SK-N-SH (cell line): ENCODE measurements at regions of chr6 and their contacts with region 1.

Region 1: GRCh38 chr6:157667211-157668008 is 155.6 kb upstream of the SNX9 start:
- DNase-seq: peak; percentile 77
- H3K4me3 ChIP-seq: peak overlapping the region in 1 of 2 experiments; percentile 37; a peak in 1 of 4 replicates
- H3K27ac ChIP-seq: no peak overlapping the region
- H3K4me1 ChIP-seq: peaks cover 5 to 9% of the 10 kb centered on the region in 2 experiments; a peak in 3 of 4 replicates
- H3K27me3 ChIP-seq: no peaks in the 10 kb centered on the region
- CTCF ChIP-seq: peak; percentile 87
- EP300 ChIP-seq: no peak
- RAD21 ChIP-seq: peak; percentile 88

Region 2: GRCh38 chr6:157314705-157315321 is 352.6 kb before region 1 on chr6:
- CTCF ChIA-PET with region 1: interaction called, 54 read pairs
- POLR2A ChIA-PET with region 1: no interaction called
- DNase-seq: peak; percentile 69
- H3K4me3 ChIP-seq: no peak overlapping the region; a peak in 1 of 4 replicates
- H3K27ac ChIP-seq: peak overlapping the region in 1 of 2 experiments; percentile 27; a peak in 2 of 4 replicates
- H3K4me1 ChIP-seq: no peaks in the 10 kb centered on the region; a peak in 2 of 4 replicates
- H3K27me3 ChIP-seq: no peaks in the 10 kb centered on the region
- CTCF ChIP-seq: peak; percentile 95
- EP300 ChIP-seq: no peak
- RAD21 ChIP-seq: peak; percentile 95

Region 3: DNA sequence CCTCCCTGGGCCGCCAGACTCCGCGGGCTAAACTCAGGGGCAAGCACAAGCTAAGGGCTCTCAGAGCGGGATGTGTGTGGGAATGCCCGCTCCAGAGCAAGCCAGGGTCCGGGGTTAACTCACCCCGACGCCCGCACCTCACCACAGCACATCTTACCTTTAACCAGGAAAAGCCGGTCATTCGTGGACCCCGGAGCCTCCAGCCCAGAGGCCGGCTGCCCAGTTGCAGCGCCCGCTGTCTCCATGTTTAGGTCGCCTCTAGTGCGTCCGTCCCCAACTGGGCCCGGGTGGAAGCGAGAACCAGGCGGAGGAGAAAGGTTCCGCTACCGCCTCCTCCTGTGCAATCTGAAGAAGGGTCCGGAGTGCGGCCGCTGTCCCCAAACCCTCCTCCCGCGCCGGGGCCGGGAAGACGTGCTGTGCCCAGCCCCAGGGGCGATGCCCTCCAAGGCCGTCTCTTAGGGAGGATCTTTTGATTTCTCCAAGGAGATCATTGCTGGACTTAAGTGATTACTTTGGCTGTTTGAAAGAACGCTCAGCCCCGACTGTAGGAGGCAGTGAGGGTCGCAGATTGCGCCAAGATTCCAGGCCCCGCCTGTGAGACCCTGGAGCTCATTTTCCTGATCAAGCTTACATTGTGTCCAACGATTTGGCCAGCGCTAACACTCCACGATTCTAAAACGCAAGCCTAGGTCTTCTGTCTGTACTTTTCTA is 344.0 kb before region 1 on chr6 and contains the start of gene TMEM242:
- CTCF ChIA-PET with region 1: interaction called, 20 read pairs
- POLR2A ChIA-PET with region 1: interaction called, 10 read pairs
- DNase-seq: peak; percentile 89
- H3K4me3 ChIP-seq: peak within 1 kb of the TSS; percentile 79 to 89
- H3K27ac ChIP-seq: peak within 1 kb of the TSS; percentile 89 to 94
- H3K4me1 ChIP-seq: peaks cover 7 to 11% of the 10 kb centered on the region in 2 experiments; a peak in 3 of 4 replicates
- H3K27me3 ChIP-seq: no peaks in the 10 kb centered on the region
- CTCF ChIP-seq: no peak
- EP300 ChIP-seq: peak in 1 of 2 experiments; percentile 66; a peak in 1 of 4 replicates
- RAD21 ChIP-seq: no peak; the same call in 1 of the 2 replicates
- polyA plus RNA-seq, gene TMEM242: 7.4 and 8.3 TPM in 2 replicates

Region 4: DNA sequence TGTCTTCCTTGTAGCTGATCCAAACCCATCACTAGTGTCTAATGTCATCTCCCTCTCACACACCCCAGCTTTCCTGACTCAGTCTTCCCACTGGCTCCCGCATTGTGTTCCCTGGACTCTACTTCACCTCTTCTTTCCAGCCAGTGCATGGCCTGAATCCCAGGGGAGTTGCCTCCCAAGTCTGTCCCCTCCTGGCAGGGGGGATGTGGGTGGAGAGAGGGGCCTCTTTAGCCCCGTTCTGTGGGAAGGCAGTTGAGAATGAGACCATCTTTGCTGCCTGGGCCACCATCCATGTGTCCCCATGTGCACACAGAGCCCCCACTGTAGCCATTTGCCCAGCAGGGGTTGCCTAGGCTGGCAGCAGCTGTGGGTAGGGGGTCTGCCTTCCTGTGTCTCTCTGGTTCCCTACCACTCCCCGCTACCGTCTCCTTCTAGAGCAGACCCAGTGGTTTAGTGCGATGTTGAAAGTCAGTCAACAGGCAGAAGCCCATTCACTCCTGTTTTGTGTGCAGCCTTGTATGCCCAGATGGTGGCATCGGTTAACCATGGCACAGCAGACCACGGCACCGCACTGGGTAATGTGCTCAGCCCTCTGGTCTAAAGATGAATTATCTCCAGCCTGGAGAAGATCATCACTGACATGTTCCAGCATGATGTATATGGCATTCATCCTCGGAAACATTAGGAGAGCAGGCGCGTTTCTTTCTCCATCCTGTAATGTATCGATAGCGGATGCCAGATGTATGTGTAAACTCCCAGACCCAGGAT is 23.2 kb before region 1 on chr6:
- CTCF ChIA-PET with region 1: interaction called, 35 read pairs
- POLR2A ChIA-PET with region 1: no interaction called
- DNase-seq: peak; percentile 75
- H3K4me3 ChIP-seq: no peak overlapping the region
- H3K27ac ChIP-seq: no peak overlapping the region
- H3K4me1 ChIP-seq: peaks cover 0 to 9% of the 10 kb centered on the region in 2 experiments; a peak in 1 of 4 replicates
- H3K27me3 ChIP-seq: no peaks in the 10 kb centered on the region
- CTCF ChIP-seq: peak; percentile 34
- EP300 ChIP-seq: 0 out of 4 replicates have a peak, but pooled peaks of 1 of the 2 experiments have one; percentile 23
- RAD21 ChIP-seq: peak; percentile 69

Region 5: DNA sequence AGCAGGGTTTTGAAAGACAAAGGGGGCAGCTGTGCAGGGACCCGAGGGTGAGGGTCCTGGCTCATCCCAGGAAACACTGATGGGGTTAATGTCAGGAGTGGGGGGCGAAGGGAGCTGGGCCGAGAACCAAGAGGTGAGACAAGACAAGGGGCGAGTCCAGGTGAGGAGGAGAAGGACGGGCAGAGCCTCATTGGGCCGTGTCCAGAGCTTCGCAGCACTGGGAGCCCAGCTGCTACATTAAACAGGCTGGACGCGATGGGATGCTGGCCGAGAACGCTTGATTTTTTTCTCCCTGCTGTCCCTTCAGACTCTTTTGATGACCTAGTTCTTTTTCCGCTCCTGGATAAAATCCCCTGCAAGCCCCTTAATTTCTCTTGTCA is 17.2 kb before region 1 on chr6:
- CTCF ChIA-PET with region 1: interaction called, 51 read pairs
- POLR2A ChIA-PET with region 1: no interaction called
- DNase-seq: peak; percentile 71
- H3K4me3 ChIP-seq: no peak overlapping the region; a peak in 1 of 4 replicates
- H3K27ac ChIP-seq: no peak overlapping the region
- H3K4me1 ChIP-seq: peaks cover 0 to 16% of the 10 kb centered on the region in 2 experiments; a peak in 1 of 4 replicates
- H3K27me3 ChIP-seq: no peaks in the 10 kb centered on the region
- CTCF ChIP-seq: no peak
- EP300 ChIP-seq: no peak
- RAD21 ChIP-seq: no peak

Region 6: GRCh38 chr6:157656437-157656997 is 10.9 kb before region 1 on chr6:
- CTCF ChIA-PET with region 1: interaction called, 51 read pairs
- POLR2A ChIA-PET with region 1: no interaction called
- DNase-seq: no peak
- H3K4me3 ChIP-seq: no peak overlapping the region
- H3K27ac ChIP-seq: no peak overlapping the region
- H3K4me1 ChIP-seq: no peaks in the 10 kb centered on the region; a peak in 1 of 4 replicates
- H3K27me3 ChIP-seq: no peaks in the 10 kb centered on the region
- CTCF ChIP-seq: no peak
- EP300 ChIP-seq: no peak
- RAD21 ChIP-seq: no peak

Region 7: DNA sequence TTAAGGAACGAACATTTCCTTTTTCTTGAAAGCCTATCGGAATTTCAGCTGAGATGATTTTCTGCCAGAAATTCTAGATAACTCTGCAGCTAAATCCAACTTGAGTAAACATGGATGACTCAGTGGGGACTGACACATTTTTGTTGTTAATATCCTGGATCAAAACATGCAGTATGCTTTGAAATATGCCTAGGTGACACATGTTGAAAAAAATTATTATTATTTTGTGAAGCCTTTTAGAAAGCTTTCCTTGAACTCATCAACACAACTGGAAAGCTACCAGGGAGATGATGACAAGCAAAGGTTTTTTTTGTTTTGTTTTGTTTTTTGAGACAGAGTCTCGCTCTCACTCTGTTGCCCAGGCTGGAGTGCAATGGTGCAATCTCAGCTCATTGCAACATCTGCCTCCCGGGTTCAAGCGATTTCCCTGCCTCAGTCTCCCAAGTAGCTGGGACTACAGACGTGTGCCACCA is 15.6 kb after region 1 on chr6:
- CTCF ChIA-PET with region 1: interaction called, 66 read pairs
- POLR2A ChIA-PET with region 1: no interaction called
- DNase-seq: no peak
- H3K4me3 ChIP-seq: no peak overlapping the region
- H3K27ac ChIP-seq: no peak overlapping the region
- H3K4me1 ChIP-seq: peaks cover 0 to 3% of the 10 kb centered on the region in 2 experiments; a peak in 1 of 4 replicates
- H3K27me3 ChIP-seq: no peaks in the 10 kb centered on the region
- CTCF ChIP-seq: no peak
- EP300 ChIP-seq: no peak
- RAD21 ChIP-seq: no peak